Dorsolateral prefrontal cortex (tissue), 120 donors: ENCODE measurements at regions of chr1 and their contacts with region 1.

Region 1: DNA sequence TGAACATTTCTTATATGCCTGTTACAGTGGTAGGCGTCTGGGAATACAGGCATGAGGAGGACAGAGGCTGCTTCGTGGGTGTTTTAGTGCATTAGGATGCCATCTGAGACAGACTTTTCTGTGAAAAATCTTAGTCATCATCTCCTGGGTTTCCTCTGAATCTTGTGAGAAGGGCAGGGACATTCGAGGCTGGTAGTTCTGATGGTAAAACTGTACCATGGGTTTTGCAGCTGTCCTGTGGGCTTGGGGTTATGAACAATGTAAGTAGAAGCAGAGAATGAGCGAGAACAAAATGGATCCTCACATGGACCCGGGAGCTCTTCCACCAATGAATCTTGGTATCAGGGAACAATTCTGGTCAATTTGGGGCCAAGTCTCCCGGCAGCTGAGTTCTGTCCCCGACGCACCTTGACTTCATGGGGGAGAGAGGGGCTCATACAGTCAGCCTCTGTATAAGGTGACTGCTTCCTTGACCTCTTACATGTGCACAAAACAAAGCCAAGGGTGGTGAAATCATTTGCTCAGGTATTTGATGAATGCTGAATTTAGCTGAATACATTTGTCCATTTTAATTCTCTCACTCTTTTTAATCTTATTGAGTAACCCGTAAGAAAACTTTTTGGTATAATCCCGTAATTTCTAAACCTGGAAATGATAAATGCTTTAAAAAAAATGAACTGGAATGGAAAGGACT is 63.6 kb upstream of the ERRFI1 start:
- DNase-seq: peak in 2 of 10 donors; percentile 33 to 43
- H3K4me3 ChIP-seq: no peak overlapping the region
- H3K27ac ChIP-seq: peak overlapping the region in 2 of 59 donors; percentile 13 to 26
- H3K27me3 ChIP-seq: peaks cover 0 to 6% (median 0%) of the 10 kb centered on the region in 45 donors
- CTCF ChIP-seq: no peak

Region 2: DNA sequence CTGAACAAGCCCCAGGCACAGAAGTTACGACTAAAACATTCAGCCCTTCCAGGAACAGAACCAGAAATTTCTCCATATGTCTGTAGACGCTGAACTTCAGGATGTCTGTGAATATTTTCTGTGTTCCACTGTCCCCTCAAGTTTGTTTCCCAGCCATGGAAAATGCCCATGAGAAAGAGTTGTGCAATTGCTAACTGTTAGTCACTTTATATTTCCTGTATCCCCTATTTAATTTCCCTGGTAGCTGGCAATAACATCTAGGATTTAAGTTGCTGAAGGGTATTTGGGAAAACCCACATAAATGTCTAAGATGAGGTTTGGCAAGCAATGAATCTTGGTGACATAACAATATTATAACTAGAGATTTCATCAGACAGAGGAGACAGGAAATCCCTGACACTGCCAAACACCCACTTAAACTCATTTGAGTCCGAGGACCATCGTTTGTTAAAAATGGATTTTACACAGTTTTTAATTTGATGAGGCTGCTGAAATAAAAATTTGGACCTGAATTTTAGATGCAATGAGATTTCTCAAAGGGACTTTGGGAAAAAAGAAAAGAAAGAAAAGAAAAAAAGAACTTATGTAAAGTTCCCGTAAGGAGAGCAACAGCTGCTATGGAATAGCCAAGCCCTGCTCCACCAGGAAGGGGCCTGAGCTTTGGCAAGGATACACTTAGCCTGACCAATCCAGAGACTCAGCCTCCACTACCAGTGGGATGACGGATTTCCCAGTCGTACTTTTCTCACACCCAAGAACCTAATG is 41.8 kb before region 1 on chr1:
- intact Hi-C with region 1: loop called in 1 of 2 experiments (anchors 5 kb)
- DNase-seq: no peak
- H3K4me3 ChIP-seq: no peak overlapping the region
- H3K27ac ChIP-seq: no peak overlapping the region
- H3K27me3 ChIP-seq: no peaks in the 10 kb centered on the region
- CTCF ChIP-seq: no peak